ENCODE measurements at regions of chr1 and their contacts with region 1.

Region 1: GRCh38 chr1:207811920-207812720 is 60.3 kb downstream of the CD46 start:
- DNase-seq: no peak
- CTCF ChIP-seq: peak; percentile 40

Region 2: DNA sequence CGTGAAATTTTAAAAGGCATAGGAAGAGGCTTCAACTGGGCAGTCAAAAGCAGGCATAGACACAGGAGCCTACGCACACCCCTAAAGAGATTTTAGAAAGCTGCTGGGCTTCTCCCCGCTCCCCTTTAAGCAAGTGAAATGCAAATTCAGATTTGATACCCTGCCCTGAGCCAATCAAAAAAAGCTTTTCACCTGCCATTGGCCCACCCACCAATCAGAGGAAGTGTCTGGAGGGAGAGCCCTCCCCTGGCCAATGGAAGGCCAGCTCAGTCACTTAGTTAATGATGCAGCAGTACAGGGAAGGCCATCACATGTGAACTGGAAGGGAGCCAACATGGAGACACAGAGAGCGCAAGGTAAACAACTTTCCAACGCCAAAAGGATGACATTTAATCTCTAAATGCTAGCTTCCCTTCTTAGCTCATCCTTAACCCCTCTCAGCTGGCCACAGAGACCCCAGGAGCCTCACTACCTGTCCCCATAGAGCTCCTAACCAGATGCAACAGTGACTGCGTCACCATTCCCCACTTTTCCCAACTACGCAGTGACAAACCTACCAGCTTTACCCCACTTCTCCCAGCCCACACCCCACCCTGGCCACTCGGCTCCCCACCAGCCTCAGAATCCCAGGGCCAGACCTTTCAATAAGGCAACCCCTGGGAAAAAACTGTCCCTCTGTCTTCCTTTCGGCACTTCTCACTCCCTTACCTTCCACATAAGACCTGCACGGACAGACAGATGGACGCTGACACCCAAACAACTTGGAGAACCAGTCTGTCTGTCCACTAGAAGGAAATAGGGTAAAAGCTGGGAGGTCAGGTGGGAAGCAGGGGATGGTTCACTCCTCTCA is 10.7 kb after region 1 on chr1:
- CTCF ChIA-PET with region 1: interaction called, 19 read pairs
- POLR2A ChIA-PET with region 1: interaction called, 17 read pairs
- DNase-seq: peak; percentile 94
- CTCF ChIP-seq: no peak

Region 3: GRCh38 chr1:207828485-207829158 is 16.5 kb after region 1 on chr1:
- CTCF ChIA-PET with region 1: interaction called, 6 read pairs
- POLR2A ChIA-PET with region 1: interaction called, 17 read pairs
- DNase-seq: peak; percentile 47
- CTCF ChIP-seq: peak; percentile 81